Kidney (tissue), 22 donors: ENCODE measurements at regions of chr2 and their contacts with region 1.

Region 1: GRCh38 chr2:98835831-98836385 is 100.1 kb downstream of the CRACDL start:
- DNase-seq: no peak
- H3K4me3 ChIP-seq: no peak overlapping the region
- H3K27ac ChIP-seq: no peak overlapping the region
- H3K4me1 ChIP-seq: peaks cover 0 to 4% (median 3%) of the 10 kb centered on the region in 3 donors
- H3K27me3 ChIP-seq: no peaks in the 10 kb centered on the region
- CTCF ChIP-seq: no peak

Region 2: GRCh38 chr2:98649135-98649991 is 186.5 kb before region 1 on chr2:
- intact Hi-C with region 1: loop called (anchors 5 kb)
- DNase-seq: peak; percentile 75 to 91 (median 89)
- H3K4me3 ChIP-seq: no peak overlapping the region
- H3K27ac ChIP-seq: no peak overlapping the region
- H3K4me1 ChIP-seq: peaks cover 0 to 5% (median 0%) of the 10 kb centered on the region in 3 donors
- H3K27me3 ChIP-seq: no peaks in the 10 kb centered on the region
- CTCF ChIP-seq: peak; percentile 100

Region 3: DNA sequence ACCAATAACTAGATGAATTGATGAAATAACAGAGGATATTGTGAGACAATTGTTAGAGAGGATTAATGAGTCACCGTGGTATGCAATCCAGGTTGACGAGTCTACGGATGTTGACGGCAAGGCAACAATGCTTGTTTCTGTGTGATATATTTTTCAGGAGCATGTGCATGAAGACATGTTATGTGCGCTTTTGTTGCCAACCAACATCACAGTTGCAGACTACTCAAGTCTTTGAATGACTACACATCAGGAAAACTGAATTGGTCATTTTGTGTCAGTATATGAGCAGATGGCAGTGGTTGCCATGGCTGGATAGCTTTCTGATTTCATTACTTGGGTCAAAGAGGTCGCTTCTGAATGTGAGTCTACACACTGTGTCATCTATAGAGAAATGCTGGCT is 196.9 kb after region 1 on chr2:
- intact Hi-C with region 1: no loop called
- DNase-seq: no peak
- H3K4me3 ChIP-seq: no peak overlapping the region
- H3K27ac ChIP-seq: no peak overlapping the region
- H3K4me1 ChIP-seq: no peaks in the 10 kb centered on the region
- H3K27me3 ChIP-seq: no peaks in the 10 kb centered on the region
- CTCF ChIP-seq: no peak